Uterus (tissue), 4 donors: ENCODE measurements at regions of chr10 and their contacts with region 1.

Region 1: DNA sequence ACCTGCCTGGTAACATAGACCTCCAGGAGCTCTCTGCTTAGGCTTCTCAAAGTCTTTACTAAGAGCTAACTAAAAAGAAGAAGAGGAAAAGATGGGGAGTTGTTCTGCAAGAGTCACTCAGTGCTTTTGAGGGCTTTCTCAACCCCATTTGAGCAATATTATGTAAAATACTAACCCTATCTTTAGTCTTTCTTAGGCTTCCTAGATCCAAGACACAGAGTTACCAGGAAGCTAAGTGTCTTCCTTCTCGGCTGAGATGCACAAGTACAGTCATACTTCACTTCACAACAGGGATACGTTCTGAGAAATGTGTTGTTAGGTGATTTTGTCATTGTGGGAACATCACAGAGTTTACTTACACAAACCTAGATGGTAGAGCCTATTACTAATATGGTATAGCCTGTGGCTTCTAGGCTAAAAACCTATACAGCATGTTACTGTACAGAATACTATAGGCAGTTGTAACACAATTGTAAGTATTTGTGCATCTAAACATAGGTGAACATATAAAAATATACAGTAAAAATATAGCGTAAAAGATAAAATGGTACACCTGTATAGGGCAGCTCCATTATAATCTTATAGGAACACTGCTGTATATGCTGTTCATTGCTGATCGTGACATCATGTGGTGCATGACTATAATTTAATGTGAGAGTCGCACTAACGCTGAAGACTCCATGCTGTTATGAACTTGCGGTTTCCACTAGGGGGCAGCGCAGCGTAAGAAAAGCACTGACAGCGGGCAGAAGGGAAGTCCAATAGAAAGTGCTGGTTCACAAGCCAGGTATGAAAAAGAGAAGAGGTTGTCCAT is 16.3 kb downstream of the ANKRD22 start:
- DNase-seq: peak; percentile 86 to 87
- H3K4me3 ChIP-seq: no peak overlapping the region
- H3K27ac ChIP-seq: no peak overlapping the region
- H3K4me1 ChIP-seq: no peaks in the 10 kb centered on the region
- H3K27me3 ChIP-seq: no peaks in the 10 kb centered on the region
- CTCF ChIP-seq: peak; percentile 77 to 91 (median 87)
- POLR2A ChIP-seq: no peak

Region 2: GRCh38 chr10:88254091-88254490 is 581.2 kb before region 1 on chr10:
- intact Hi-C with region 1: no loop called
- DNase-seq: peak; percentile 38 to 43
- H3K4me3 ChIP-seq: no peak overlapping the region
- H3K27ac ChIP-seq: peak overlapping the region; percentile 80 to 81
- H3K4me1 ChIP-seq: peaks cover 0 to 5% of the 10 kb centered on the region in 2 donors
- H3K27me3 ChIP-seq: no peaks in the 10 kb centered on the region
- CTCF ChIP-seq: no peak
- POLR2A ChIP-seq: no peak

Region 3: GRCh38 chr10:88932539-88933256 is 97.4 kb after region 1 on chr10:
- intact Hi-C with region 1: loop called (anchors 5 kb)
- DNase-seq: peak; percentile 51 to 80
- H3K4me3 ChIP-seq: no peak overlapping the region
- H3K27ac ChIP-seq: peak overlapping the region; percentile 66 to 83
- H3K4me1 ChIP-seq: peaks cover 3 to 5% of the 10 kb centered on the region in 2 donors
- H3K27me3 ChIP-seq: no peaks in the 10 kb centered on the region
- CTCF ChIP-seq: peak; percentile 92 to 96 (median 94)
- POLR2A ChIP-seq: peak in 1 of 2 donors; percentile 25

Region 4: DNA sequence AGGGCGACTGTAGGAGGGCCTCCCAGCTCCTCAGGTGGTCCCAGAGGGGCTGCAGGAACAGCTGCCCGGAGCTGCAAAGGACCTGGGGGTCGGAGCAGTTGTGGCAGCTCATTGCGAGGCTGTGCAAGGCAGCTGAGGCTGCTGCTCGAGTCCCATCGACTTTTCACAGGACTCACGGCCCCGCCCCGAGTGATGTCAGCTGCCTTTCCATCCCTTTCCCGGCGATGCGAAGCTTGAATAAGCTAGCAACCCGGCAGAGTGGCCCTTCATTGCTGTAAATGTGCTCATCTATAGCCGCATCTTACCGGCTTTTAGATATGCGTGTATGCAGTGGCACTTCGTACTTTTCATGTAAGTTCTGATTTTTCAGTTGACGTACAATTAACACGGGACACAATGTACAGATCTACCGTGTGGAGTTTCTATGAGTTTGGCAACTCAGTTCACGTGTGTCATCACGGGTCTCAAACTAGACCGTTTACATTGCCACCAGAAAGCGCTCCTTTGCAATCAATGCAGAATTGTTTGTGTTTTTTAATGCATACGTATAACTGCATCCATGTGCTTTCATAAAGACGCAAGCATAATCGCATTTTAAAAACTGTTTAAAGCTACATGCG is 372.0 kb after region 1 on chr10 and contains the start of gene CH25H:
- intact Hi-C with region 1: loop called (anchors 10 kb)
- DNase-seq: peak; percentile 76 to 80
- H3K4me3 ChIP-seq: peak within 1 kb of the TSS; percentile 23 to 41
- H3K27ac ChIP-seq: peak within 1 kb of the TSS; percentile 49 to 60
- H3K4me1 ChIP-seq: no peaks in the 10 kb centered on the region
- H3K27me3 ChIP-seq: no peaks in the 10 kb centered on the region
- CTCF ChIP-seq: no peak
- POLR2A ChIP-seq: peak; percentile 58 to 59
- total RNA-seq, gene CH25H: 0.24 to 0.48 TPM in 2 of 4 donors, not detected in the others